HCT116 (cell line): ENCODE measurements at regions of chr21 and their contacts with region 1.

Region 1: GRCh38 chr21:25607151-25608043 is at the start of gene MRPL39:
- DNase-seq: peak; percentile 80
- ATAC-seq: peak; percentile 93
- H3K4me3 ChIP-seq: peak within 1 kb of the TSS; percentile 91 to 93
- H3K27ac ChIP-seq: peak within 1 kb of the TSS; percentile 72
- H3K4me1 ChIP-seq: peaks cover 7 to 15% of the 10 kb centered on the region in 2 experiments; a peak in 3 of 4 replicates
- H3K27me3 ChIP-seq: no peaks in the 10 kb centered on the region
- CTCF ChIP-seq: peak; percentile 6 to 71 (median 61); a peak in 4 of 6 replicates
- POLR2A ChIP-seq: peak; percentile 70
- RAD21 ChIP-seq: no peak; the same call in 1 of the 2 replicates
- total RNA-seq, gene MRPL39: 41.1 TPM

Region 2: GRCh38 chr21:24628046-24628445 is 979.4 kb before region 1 on chr21:
- CTCF ChIA-PET with region 1: no interaction called
- POLR2A ChIA-PET with region 1: no interaction called
- RAD21 ChIA-PET with region 1: no interaction called
- intact Hi-C with region 1: no loop called
- DNase-seq: no peak
- ATAC-seq: no peak
- H3K4me3 ChIP-seq: no peak overlapping the region
- H3K27ac ChIP-seq: no peak overlapping the region
- H3K4me1 ChIP-seq: no peaks in the 10 kb centered on the region
- H3K27me3 ChIP-seq: no peaks in the 10 kb centered on the region
- CTCF ChIP-seq: no peak
- POLR2A ChIP-seq: no peak
- RAD21 ChIP-seq: no peak

Region 3: GRCh38 chr21:25199944-25200343 is 407.5 kb before region 1 on chr21:
- CTCF ChIA-PET with region 1: no interaction called
- POLR2A ChIA-PET with region 1: no interaction called
- RAD21 ChIA-PET with region 1: no interaction called
- intact Hi-C with region 1: no loop called
- DNase-seq: no peak
- ATAC-seq: no peak
- H3K4me3 ChIP-seq: no peak overlapping the region
- H3K27ac ChIP-seq: no peak overlapping the region
- H3K4me1 ChIP-seq: no peaks in the 10 kb centered on the region
- H3K27me3 ChIP-seq: no peaks in the 10 kb centered on the region
- CTCF ChIP-seq: no peak
- POLR2A ChIP-seq: no peak
- RAD21 ChIP-seq: no peak

Region 4: DNA sequence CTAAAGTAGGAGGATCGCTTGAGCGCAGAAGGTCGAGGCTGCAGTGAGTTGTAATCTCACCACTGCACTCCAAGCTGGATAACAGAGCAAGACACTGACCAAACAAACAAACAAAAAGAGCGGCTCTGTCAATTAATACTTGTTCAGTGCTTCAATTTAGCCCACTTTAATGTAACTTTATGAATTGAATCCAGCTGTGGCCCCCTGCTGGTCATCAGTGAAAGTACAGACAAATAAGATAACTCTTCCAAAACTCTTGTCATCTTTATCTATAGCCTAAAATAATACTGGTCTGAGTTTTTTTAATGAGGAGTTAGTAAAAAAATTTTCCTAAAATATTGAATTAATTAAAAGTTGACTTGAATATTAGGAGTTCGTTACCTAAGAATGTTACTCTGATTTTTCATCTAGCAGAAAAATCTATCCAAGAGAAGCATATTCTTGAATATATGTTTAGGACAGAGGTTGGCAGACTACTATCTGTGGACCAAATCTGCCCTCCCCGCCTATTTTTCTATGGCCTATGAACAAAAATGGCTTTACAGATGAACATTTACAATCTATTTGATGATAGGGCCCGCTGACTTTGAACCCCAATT is 101.2 kb after region 1 on chr21:
- CTCF ChIA-PET with region 1: interaction called, 3 read pairs
- POLR2A ChIA-PET with region 1: no interaction called
- RAD21 ChIA-PET with region 1: no interaction called
- intact Hi-C with region 1: loop called (anchors 1 kb)
- DNase-seq: peak; percentile 26
- ATAC-seq: no peak
- H3K4me3 ChIP-seq: no peak overlapping the region
- H3K27ac ChIP-seq: no peak overlapping the region
- H3K4me1 ChIP-seq: no peaks in the 10 kb centered on the region
- H3K27me3 ChIP-seq: no peaks in the 10 kb centered on the region
- CTCF ChIP-seq: peak; percentile 30 to 84 (median 73); a peak in 5 of 6 replicates
- POLR2A ChIP-seq: no peak
- RAD21 ChIP-seq: peak; percentile 35; the same call in 1 of the 2 replicates

Region 5: DNA sequence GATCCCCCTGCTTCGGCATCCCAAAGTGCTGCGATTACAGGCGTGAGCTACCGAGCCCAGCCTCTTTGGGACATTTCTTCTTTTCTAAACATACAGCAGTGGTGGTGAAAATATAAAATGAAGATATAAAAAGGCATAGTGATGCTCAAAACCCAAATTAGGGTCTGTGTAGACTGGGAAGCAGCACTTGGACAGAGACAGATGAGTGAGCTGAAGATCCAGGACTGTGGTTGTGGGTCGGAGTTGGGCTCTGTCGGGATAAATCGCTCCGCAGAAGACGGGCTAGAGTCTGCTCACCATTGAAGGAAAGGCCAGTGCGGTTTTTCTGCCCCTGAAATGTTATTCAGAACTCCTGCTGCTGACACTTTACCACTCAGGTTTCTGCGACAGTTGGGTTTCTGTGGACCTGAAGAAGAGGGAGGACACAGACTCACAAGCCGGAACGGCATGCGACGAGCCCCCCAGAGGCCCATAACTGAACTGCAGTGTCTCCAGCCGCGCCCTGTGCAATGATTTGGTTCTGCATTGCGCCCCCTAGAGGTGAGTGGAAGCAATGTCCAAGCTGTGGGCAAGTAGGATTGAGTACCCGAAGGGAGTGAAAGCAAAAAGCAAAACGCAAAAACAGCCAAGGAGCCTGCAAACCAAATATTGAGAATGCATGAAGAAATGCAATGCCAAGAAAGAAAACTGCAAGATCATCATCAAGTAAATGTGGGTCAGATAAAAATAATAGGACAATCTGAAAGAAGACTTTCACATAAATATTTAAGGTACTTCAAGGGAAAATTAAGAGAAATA is 194.0 kb after region 1 on chr21:
- CTCF ChIA-PET with region 1: no interaction called
- POLR2A ChIA-PET with region 1: no interaction called
- RAD21 ChIA-PET with region 1: no interaction called
- intact Hi-C with region 1: loop called (anchors 1 kb)
- DNase-seq: peak; percentile 89
- ATAC-seq: peak; percentile 99
- H3K4me3 ChIP-seq: no peak overlapping the region; a peak in 1 of 4 replicates
- H3K27ac ChIP-seq: no peak overlapping the region
- H3K4me1 ChIP-seq: no peaks in the 10 kb centered on the region
- H3K27me3 ChIP-seq: no peaks in the 10 kb centered on the region
- CTCF ChIP-seq: peak; percentile 98 to 100 (median 100)
- POLR2A ChIP-seq: no peak
- RAD21 ChIP-seq: peak; percentile 53; the same call in 1 of the 2 replicates

Region 6: GRCh38 chr21:25881525-25882376 is 274.4 kb after region 1 on chr21:
- CTCF ChIA-PET with region 1: no interaction called
- POLR2A ChIA-PET with region 1: no interaction called
- RAD21 ChIA-PET with region 1: no interaction called
- intact Hi-C with region 1: loop called (anchors 5 kb)
- DNase-seq: peak; percentile 41
- ATAC-seq: peak; percentile 86
- H3K4me3 ChIP-seq: no peak overlapping the region
- H3K27ac ChIP-seq: no peak overlapping the region
- H3K4me1 ChIP-seq: no peaks in the 10 kb centered on the region
- H3K27me3 ChIP-seq: no peaks in the 10 kb centered on the region
- CTCF ChIP-seq: peak; percentile 55 to 97 (median 92); a peak in 5 of 6 replicates
- POLR2A ChIP-seq: no peak
- RAD21 ChIP-seq: peak; percentile 69

Region 7: GRCh38 chr21:26170471-26171257 is 563.3 kb after region 1 on chr21 and contains the start of gene APP:
- CTCF ChIA-PET with region 1: interaction called, 3 read pairs
- POLR2A ChIA-PET with region 1: no interaction called
- RAD21 ChIA-PET with region 1: no interaction called
- intact Hi-C with region 1: loop called (anchors 10 kb)
- DNase-seq: peak; percentile 19
- ATAC-seq: peak; percentile 77
- H3K4me3 ChIP-seq: peak within 1 kb of the TSS; percentile 81 to 89
- H3K27ac ChIP-seq: peak within 1 kb of the TSS; percentile 91
- H3K4me1 ChIP-seq: peaks cover 27 to 36% of the 10 kb centered on the region in 2 experiments
- H3K27me3 ChIP-seq: no peaks in the 10 kb centered on the region
- CTCF ChIP-seq: peak; percentile 14 to 76 (median 72); a peak in 4 of 6 replicates
- POLR2A ChIP-seq: peak; percentile 32
- RAD21 ChIP-seq: peak; percentile 53
- total RNA-seq, gene APP: 267 TPM